ENCODE measurements at regions of chr2 and their contacts with region 1.

Region 1: DNA sequence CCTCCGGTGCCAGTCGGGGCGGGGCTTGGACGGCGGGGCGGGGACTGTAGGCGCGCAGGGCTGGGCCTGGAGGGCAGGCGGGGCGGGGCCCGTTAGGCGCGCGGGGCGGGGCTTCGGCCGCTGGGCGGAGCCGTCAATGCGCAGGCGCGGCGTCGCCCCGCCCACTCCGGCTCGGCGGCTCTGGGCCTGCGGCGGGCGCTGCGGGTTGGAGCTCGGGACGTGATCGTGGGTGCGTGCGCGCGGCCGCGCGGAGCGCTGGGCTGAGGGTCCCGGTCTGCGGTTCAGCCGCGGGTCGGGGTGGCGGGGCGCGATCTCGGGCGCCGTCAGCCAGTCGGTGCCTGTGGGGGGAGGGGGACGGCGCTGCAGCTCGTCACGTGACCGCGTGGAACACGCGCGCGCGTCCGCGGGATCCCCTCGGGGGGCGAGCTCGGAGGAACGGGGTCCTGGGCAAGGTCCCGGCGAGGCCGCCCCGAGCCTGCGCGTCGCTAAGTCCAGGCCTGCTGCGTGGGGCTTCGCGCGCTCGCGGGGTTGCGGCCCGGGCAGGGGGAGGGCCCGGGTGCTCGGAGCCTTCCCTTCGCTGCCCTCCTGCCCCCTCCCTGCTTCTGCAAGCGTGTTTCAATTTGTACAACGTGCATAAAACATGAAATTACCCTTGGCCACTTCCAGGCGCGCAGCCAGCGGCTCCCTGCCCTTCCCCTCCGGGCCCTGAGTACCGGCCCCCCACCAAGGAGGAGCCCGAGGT is at the start of gene D2HGDH:
- DNase-seq: peak; percentile 70
- H3K4me3 ChIP-seq: peak within 1 kb of the TSS; percentile 49 to 85 (median 72)
- H3K27ac ChIP-seq: no peak within 1 kb of the TSS
- H3K4me1 ChIP-seq: peaks cover 30% of the 10 kb centered on the region
- H3K27me3 ChIP-seq: no peaks in the 10 kb centered on the region
- CTCF ChIP-seq: no peak
- total RNA-seq, gene D2HGDH: 13.8 to 27.2 TPM

Region 2: GRCh38 chr2:241609859-241610793 is 124.5 kb before region 1 on chr2:
- CTCF ChIA-PET with region 1: no interaction called
- dilution Hi-C with region 1: no loop called
- in situ Hi-C with region 1: no loop called
- intact Hi-C with region 1: no loop called
- DNase-seq: peak; percentile 81
- H3K4me3 ChIP-seq: peak overlapping the region; percentile 33 to 44 (median 43)
- H3K27ac ChIP-seq: peak overlapping the region; percentile 46
- H3K4me1 ChIP-seq: peaks cover 11% of the 10 kb centered on the region
- H3K27me3 ChIP-seq: no peaks in the 10 kb centered on the region
- CTCF ChIP-seq: peak; percentile 48 to 57

Region 3: DNA sequence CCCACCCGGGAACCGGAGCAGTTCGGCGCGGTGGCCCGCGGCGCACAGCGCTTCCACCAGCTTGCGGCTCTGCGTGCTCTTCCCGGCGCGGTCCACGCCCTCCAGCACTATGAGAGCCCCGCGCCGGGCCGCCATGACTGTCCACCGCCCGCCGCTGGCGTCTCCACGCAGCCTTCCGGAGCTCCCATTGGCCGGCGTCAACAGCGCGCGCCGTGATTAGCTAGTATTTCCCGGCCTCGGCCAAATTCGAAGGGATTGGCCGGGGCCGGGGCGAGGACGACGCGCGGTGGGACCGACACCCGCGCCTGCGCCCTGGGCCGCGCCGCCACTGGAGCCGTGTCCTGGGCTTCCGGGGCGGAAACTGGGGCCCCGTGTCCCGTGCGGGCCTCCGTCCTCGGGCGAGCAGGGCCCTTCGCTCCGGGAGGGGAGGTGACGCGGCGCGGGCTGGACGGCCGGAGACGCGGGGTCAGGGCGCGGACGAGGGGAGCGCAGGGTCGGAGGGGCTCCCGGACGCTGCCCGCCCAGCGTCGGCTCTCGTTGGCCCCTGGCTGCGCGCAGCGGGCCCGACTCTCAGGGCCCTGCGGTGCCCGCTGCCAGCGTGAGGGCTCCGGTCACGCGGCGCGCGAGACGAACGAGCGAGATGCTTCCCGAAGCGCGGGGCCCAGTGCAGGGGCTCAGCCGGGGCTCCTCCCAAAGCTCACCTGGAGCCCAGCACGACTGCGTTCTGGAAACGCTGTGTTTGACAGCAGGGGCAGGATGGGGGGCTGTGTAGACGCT is 47.8 kb before region 1 on chr2 and contains the start of gene DTYMK:
- CTCF ChIA-PET with region 1: no interaction called
- dilution Hi-C with region 1: no loop called
- in situ Hi-C with region 1: no loop called
- intact Hi-C with region 1: loop called (anchors 5 kb)
- DNase-seq: peak; percentile 98
- H3K4me3 ChIP-seq: peak within 1 kb of the TSS; percentile 73 to 89 (median 85)
- H3K27ac ChIP-seq: peak within 1 kb of the TSS; percentile 63
- H3K4me1 ChIP-seq: peaks cover 16% of the 10 kb centered on the region
- H3K27me3 ChIP-seq: no peaks in the 10 kb centered on the region
- CTCF ChIP-seq: no peak
- total RNA-seq, gene DTYMK: 10.5 to 49.3 TPM

Region 4: GRCh38 chr2:241702132-241703031 is 32.3 kb before region 1 on chr2:
- CTCF ChIA-PET with region 1: no interaction called
- dilution Hi-C with region 1: no loop called
- in situ Hi-C with region 1: no loop called
- intact Hi-C with region 1: loop called (anchors 1 kb)
- DNase-seq: peak; percentile 81
- H3K4me3 ChIP-seq: peak overlapping the region; percentile 89 to 93 (median 90)
- H3K27ac ChIP-seq: peak overlapping the region; percentile 50
- H3K4me1 ChIP-seq: peaks cover 13% of the 10 kb centered on the region
- H3K27me3 ChIP-seq: no peaks in the 10 kb centered on the region
- CTCF ChIP-seq: peak; percentile 24 to 40

Region 5: DNA sequence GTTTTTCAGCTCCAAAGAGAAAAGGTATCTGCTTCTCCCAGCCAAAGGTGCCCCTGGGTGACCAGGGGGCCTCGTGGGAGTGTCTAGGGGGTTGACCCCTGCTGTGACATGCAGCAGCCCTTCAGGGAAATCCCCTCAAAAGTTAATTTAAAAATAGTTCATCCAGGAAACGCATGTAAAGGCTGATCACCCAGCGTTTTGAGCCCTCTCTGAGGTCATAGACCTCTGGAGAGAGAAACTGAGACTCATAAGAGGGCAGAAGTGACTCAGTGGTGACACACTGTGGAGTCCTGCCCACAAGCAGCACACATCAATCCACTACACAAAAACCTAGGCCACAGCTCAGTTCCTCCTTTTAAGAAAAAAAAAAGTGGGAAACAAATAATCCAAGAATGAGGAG is 53.9 kb after region 1 on chr2:
- CTCF ChIA-PET with region 1: no interaction called
- dilution Hi-C with region 1: no loop called
- in situ Hi-C with region 1: no loop called
- intact Hi-C with region 1: no loop called
- DNase-seq: peak; percentile 27
- H3K4me3 ChIP-seq: no peak overlapping the region
- H3K27ac ChIP-seq: no peak overlapping the region
- H3K4me1 ChIP-seq: no peaks in the 10 kb centered on the region
- H3K27me3 ChIP-seq: no peaks in the 10 kb centered on the region
- CTCF ChIP-seq: no peak